ENCODE measurements at regions of chr5 and their contacts with region 1.

Region 1: GRCh38 chr5:139293504-139294373 is at the start of gene MATR3:
- H3K4me3 ChIP-seq: peak within 1 kb of the TSS; percentile 93
- H3K27ac ChIP-seq: peak within 1 kb of the TSS; percentile 100
- H3K4me1 ChIP-seq: peaks cover 30% of the 10 kb centered on the region
- CTCF ChIP-seq: no peak; the same call in 1 of the 2 replicates

Region 2: GRCh38 chr5:138575194-138576015 is 718.3 kb before region 1 on chr5 and contains the start of gene HSPA9:
- CTCF ChIA-PET with region 1: no interaction called
- POLR2A ChIA-PET with region 1: interaction called, 12 read pairs
- H3K4me3 ChIP-seq: peak within 1 kb of the TSS; percentile 75
- H3K27ac ChIP-seq: peak within 1 kb of the TSS; percentile 99
- H3K4me1 ChIP-seq: no peaks in the 10 kb centered on the region
- CTCF ChIP-seq: peak; percentile 54; the same call in 1 of the 2 replicates

Region 3: GRCh38 chr5:139273572-139274289 is 20.0 kb before region 1 on chr5:
- CTCF ChIA-PET with region 1: interaction called, 4 read pairs
- POLR2A ChIA-PET with region 1: interaction called, 29 read pairs
- H3K4me3 ChIP-seq: peak overlapping the region; percentile 48
- H3K27ac ChIP-seq: peak overlapping the region; percentile 52
- H3K4me1 ChIP-seq: peaks cover 17% of the 10 kb centered on the region
- CTCF ChIP-seq: peak; percentile 56

Region 4: DNA sequence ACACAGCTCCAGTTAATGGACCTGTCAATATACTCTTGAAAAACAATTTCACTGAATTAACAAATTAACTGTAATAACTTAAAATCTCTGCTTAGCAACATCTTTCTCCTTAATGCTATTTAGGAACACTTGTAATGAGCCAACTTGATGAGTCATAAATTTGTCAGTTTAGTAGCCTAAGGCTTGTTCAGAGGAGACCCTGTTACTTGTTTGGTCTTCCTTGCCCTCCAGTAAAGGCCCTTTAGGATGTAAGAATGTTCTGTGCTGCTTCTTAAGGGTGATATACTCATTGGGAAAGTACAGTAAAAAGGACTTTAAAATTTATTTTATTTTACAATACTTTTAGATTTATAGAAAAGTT is 11.6 kb before region 1 on chr5:
- CTCF ChIA-PET with region 1: interaction called, 4 read pairs
- POLR2A ChIA-PET with region 1: interaction called, 24 read pairs
- H3K4me3 ChIP-seq: no peak overlapping the region
- H3K27ac ChIP-seq: no peak overlapping the region
- H3K4me1 ChIP-seq: peaks cover 12% of the 10 kb centered on the region
- CTCF ChIP-seq: no peak

Region 5: GRCh38 chr5:139304391-139305324 is 10.9 kb after region 1 on chr5:
- CTCF ChIA-PET with region 1: interaction called, 3 read pairs
- POLR2A ChIA-PET with region 1: interaction called, 21 read pairs
- H3K4me3 ChIP-seq: no peak overlapping the region
- H3K27ac ChIP-seq: no peak overlapping the region
- H3K4me1 ChIP-seq: peaks cover 71% of the 10 kb centered on the region
- CTCF ChIP-seq: no peak

Region 6: DNA sequence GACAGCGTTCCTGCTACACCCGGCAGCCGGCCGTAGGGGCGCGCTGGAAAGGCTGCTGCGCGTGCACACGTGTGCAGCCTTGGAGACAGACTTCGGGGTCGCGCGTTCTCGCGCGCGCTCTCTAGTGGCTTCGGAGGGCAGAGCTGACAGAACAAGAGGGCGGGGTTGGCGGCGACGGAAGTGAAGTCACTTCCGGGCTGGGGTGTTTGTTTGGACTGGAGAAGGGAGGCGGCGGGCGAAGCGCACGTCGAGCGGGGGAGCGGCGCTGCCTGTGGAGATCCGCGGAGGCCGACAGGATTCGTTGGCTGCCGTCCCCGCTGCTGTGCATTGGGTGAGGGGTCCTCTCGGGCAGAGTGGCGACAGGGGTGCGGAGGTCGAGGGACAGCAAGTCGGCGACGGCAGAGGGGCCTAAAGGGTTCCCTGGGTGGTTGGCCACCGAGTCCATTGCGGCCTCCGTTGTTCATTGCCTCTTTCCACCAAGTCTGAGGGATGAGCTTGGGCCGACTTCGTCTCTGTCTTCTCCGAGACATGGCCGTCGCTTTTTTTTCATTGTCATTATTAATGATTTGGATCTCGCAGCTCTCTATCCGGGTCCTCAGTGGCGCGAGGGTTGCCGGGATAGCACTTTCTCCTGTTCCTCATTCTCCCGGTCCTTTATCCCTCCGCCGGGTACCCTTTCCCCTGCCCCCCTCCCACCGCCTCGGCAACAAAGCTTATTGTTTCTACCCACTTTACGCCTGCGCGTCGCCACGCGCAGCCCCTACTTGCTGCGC is 48.1 kb after region 1 on chr5 and contains the start of gene PAIP2:
- CTCF ChIA-PET with region 1: interaction called, 6 read pairs
- POLR2A ChIA-PET with region 1: interaction called, 62 read pairs
- H3K4me3 ChIP-seq: peak within 1 kb of the TSS; percentile 97
- H3K27ac ChIP-seq: peak within 1 kb of the TSS; percentile 97
- H3K4me1 ChIP-seq: peaks cover 11% of the 10 kb centered on the region
- CTCF ChIP-seq: peak; percentile 100

Measured in HEK293 (cell line).